Dendritic cell treated with granulocyte-macrophage colony-stimulating factor and Interleukin-4, amounts not matched to agents 40 ng/mL and 50 ng/mL, for 4 days (primary cell): ENCODE measurements at regions of chr2 and their contacts with region 1.

Region 1: GRCh38 chr2:109510136-109511028 is 103.4 kb downstream of the SEPTIN10 start:
- H3K4me3 Mint-ChIP-seq: no peak overlapping the region
- H3K27ac Mint-ChIP-seq: no peak overlapping the region
- H3K4me1 Mint-ChIP-seq: no peaks in the 10 kb centered on the region
- H3K27me3 Mint-ChIP-seq: no peaks in the 10 kb centered on the region

Region 2: DNA sequence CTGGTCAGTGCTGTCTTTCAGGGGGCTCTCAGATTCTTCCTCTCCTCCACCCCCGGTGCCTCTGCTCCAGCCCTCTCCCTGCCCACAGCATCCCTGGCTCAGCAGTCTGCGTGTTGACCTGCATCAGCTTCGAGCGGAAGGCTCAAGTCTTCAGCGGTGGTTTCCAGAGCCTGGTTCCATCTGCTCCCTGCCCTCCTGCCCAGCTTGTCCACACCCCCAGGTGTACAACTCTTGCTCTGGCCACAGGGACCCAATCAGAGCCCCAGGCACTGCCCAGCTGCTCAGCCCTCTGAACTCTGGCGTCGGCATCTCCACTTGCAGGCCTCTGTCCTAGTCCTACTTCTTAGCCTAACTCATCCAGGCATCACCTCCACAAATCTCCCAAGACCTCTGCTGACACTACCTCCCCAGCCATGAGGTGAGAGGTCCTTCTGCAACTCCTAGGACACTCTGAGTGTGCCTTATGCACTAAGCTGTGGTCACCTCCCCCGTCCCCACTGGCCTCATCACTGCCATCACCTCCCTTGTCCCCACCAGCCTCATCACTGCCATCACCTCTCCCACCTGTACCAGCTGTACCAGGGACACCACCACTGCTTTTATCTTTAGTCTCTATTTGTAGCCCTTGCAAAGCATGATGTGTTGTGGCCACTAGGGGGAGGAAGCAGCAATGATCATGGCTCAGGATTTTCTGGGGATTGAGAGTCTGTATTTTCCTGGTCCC is 582.3 kb before region 1 on chr2:
- intact Hi-C with region 1: loop called (anchors 5 kb)
- H3K4me3 Mint-ChIP-seq: no peak overlapping the region
- H3K27ac Mint-ChIP-seq: no peak overlapping the region
- H3K4me1 Mint-ChIP-seq: no peaks in the 10 kb centered on the region
- H3K27me3 Mint-ChIP-seq: no peaks in the 10 kb centered on the region

Region 3: GRCh38 chr2:109128048-109128465 is 382.3 kb before region 1 on chr2:
- intact Hi-C with region 1: loop called (anchors 1 kb)
- H3K4me3 Mint-ChIP-seq: peak overlapping the region; percentile 81
- H3K27ac Mint-ChIP-seq: no peak overlapping the region
- H3K4me1 Mint-ChIP-seq: peaks cover 28% of the 10 kb centered on the region
- H3K27me3 Mint-ChIP-seq: peaks cover 53% of the 10 kb centered on the region

Region 4: GRCh38 chr2:109254174-109254904 is 256.0 kb before region 1 on chr2:
- intact Hi-C with region 1: loop called (anchors 10 kb)
- H3K4me3 Mint-ChIP-seq: peak overlapping the region; percentile 9
- H3K27ac Mint-ChIP-seq: peak overlapping the region; percentile 45
- H3K4me1 Mint-ChIP-seq: peaks cover 46% of the 10 kb centered on the region
- H3K27me3 Mint-ChIP-seq: peaks cover 15% of the 10 kb centered on the region